ENCODE measurements at regions of chr1 and their contacts with region 1.

Region 1: DNA sequence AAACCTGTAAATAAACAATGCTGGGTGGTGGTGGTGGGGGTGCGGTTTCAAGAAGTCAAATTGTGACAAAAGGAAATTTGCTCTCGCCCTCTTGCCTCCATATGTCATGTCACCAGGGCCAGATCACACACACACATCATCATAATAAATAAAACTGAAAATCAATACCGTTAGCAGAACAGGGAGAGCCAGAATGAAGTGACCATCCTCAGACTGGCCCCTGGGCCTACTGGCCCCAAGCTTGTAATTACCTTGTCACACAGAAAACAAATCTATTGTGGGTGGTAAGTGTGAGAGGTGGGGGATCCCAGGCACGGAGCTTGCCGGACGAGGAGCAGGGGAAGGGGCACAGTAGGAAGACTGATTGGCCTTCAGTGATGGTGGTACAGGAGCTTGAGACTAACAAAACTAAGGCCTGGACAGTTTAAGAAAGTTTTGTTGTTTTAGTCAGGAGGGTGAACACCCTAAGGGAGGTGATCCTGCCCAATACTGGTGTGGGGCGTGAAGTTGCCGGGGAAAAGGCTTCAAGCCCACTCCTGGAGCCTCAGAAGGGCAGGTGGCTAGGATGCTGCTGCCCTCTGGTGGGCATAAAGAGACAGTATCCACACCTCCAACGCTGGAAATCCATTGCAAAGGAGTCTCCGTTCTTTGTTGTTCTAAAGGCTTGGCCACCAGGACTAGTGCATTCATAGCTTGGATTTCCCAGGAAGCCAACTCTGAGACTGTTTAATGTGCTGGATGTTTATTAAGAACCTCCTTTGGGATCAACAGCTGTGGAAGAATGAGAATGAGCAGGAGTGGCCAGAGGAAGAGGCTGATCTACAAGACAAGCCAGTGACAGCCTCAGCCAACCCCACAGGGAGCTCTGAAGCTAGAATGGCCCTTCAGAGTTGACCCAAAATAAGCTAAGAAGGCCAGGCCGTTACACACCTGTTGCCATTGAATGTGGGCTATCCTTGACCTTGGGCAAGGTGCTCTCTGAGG is 8.1 kb upstream of the C1orf216 start:
- DNase-seq: no peak
- H3K4me3 ChIP-seq: no peak overlapping the region
- H3K27ac ChIP-seq: no peak overlapping the region
- H3K4me1 ChIP-seq: no peaks in the 10 kb centered on the region
- H3K27me3 ChIP-seq: no peaks in the 10 kb centered on the region
- CTCF ChIP-seq: peak; percentile 42 to 71 (median 65)
- POLR2A ChIP-seq: no peak

Region 2: GRCh38 chr1:35573198-35574090 is 153.3 kb before region 1 on chr1 and contains the start of gene TFAP2E:
- intact Hi-C with region 1: loop called (anchors 5 kb)
- DNase-seq: no peak
- H3K4me3 ChIP-seq: peak within 1 kb of the TSS; percentile 31 to 78 (median 59)
- H3K27ac ChIP-seq: no peak within 1 kb of the TSS
- H3K4me1 ChIP-seq: no peaks in the 10 kb centered on the region
- H3K27me3 ChIP-seq: no peaks in the 10 kb centered on the region
- CTCF ChIP-seq: no peak
- POLR2A ChIP-seq: no peak
- total RNA-seq, gene TFAP2E: 0.44 to 2.6 (median 0.64) TPM

Region 3: GRCh38 chr1:35769188-35769758 is 42.5 kb after region 1 on chr1:
- intact Hi-C with region 1: no loop called
- DNase-seq: peak; percentile 39 to 67
- H3K4me3 ChIP-seq: peak overlapping the region; percentile 70 to 88 (median 87)
- H3K27ac ChIP-seq: peak overlapping the region; percentile 16 to 64
- H3K4me1 ChIP-seq: no peaks in the 10 kb centered on the region
- H3K27me3 ChIP-seq: no peaks in the 10 kb centered on the region
- CTCF ChIP-seq: no peak
- POLR2A ChIP-seq: no peak